Activated B cell treated with CpG ODN at 0.5 μM for 24 hours (primary cell): ENCODE measurements at regions of chr16 and their contacts with region 1.

Region 1: DNA sequence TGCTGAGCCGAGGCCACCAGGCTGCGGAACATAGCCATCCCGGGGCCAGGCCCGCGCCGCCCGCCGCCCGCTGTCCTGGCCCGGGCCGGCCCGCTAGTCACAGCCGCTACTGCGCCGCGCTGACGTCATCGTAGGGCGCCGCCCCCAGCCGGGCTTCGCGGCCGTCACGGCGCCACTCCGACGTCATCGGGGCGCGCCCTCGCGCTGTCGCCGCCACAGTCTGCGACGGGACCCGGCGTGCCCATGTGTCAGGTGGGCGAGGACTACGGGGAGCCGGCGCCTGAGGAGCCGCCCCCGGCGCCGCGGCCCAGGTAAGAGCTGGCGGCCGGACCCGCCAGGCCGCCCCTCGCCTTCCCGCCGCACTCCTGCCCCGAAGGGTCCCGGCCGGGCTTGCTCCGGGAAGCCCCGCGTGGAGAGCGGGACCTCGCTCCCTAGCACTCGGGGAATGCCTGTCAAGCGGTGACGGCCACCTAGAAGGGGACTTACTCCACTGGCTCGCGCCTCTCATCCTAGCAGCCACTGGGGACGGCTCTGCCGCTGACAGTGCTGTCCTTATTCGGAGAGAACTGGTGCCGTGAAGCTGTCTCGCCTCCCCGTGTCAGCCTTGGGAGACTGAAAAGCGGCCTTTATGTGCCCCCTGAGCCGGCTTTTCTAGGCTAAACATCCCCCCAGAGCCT is at the starts of genes CTU2 and RNF166:
- DNase-seq: peak; percentile 95
- ATAC-seq: peak; percentile 70
- H3K4me3 Mint-ChIP-seq: peak within 1 kb of the TSS; percentile 87
- H3K27ac Mint-ChIP-seq: peak within 1 kb of the TSS; percentile 85
- H3K4me1 Mint-ChIP-seq: peaks cover 51% of the 10 kb centered on the region
- H3K27me3 Mint-ChIP-seq: no peaks in the 10 kb centered on the region
- CTCF ChIP-seq: no peak
- total RNA-seq, gene CTU2: 28.8 and 36.7 TPM in 2 replicates
- total RNA-seq, gene RNF166: 31.0 and 45.3 TPM in 2 replicates

Region 2: DNA sequence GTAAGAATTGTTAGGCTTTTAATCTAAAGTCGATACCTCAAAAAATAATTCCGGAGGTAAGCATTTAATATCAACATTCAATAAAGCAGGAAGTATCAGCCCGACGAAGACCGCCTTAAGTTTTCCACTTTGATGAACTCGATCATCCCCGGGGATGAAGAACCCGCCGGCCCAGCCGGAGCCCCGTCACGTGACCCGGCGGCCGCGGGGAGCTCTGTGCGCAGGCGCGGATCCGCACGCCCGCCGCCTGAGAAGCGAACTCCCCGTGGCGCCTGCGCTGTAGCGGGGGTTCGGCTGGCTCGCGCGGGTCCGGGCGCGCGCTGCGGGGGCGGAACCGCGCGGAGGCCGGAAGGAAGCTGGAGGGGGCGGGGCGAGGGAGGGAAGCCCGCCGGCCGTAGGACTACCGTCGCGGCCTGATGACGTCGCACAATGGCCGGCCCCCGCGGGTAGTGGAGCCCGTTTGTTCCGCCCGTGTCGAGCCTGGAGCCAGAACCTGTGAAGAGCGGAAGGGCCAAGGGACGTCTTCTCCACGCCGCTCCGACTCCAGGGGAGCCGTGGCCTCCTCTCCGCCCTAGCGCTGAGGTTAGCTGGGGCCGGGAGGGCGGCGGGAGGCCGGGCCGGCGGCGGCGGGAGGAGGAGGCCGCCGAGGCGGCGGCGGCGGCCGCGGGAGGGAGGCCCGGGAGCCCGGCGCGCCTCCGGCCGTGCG is 136.3 kb before region 1 on chr16 and contains the start of gene ZC3H18:
- CTCF ChIA-PET with region 1: no interaction called
- POLR2A ChIA-PET with region 1: interaction called, 8 read pairs
- intact Hi-C with region 1: loop called (anchors 1 kb)
- DNase-seq: peak; percentile 99
- ATAC-seq: peak; percentile 92
- H3K4me3 Mint-ChIP-seq: peak within 1 kb of the TSS; percentile 86
- H3K27ac Mint-ChIP-seq: peak within 1 kb of the TSS; percentile 76
- H3K4me1 Mint-ChIP-seq: peaks cover 25% of the 10 kb centered on the region
- H3K27me3 Mint-ChIP-seq: no peaks in the 10 kb centered on the region
- CTCF ChIP-seq: no peak
- total RNA-seq, gene ZC3H18: 61.7 and 74.2 TPM in 2 replicates

Region 3: DNA sequence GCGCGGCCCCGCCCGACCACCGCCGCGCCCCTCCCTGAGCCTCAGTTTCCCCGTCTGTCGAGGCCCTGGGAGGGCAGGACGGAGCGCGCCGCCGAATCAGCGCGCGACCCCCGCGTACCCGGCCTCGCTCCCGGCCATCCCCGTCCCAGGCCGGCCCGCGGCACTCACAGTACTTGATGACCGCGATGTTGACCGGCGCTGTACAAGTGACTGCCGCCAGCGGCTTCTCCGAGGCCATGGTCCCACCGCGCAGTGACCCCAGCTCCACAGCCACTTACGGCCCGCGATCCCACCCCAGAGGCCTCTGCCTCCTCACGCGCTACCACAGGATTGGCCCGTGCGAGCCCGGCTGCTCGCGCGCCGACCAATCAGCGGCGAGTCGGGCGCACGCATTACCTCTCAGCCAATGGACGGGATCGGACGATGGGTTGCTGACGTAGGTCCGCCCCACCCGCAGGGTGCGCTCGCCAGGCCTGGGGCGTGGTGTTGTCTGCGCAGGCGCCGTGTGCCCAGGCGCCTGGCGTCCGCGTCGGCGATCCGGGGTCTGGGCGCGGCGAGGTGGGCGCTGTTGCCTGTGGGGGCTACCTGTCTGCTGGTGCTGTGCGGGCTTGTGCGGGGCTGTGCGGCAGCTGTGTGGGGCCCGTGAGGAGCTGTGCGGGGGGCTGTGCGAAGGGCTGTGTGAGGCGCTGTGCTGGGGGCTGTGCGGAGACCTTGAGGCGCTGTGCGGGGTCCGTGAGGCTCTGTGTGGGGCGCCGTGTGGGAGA is 43.4 kb before region 1 on chr16 and contains the start of gene MVD:
- CTCF ChIA-PET with region 1: interaction called, 3 read pairs
- POLR2A ChIA-PET with region 1: interaction called, 10 read pairs
- intact Hi-C with region 1: loop called (anchors 2 kb)
- DNase-seq: peak; percentile 89
- ATAC-seq: peak; percentile 94
- H3K4me3 Mint-ChIP-seq: peak within 1 kb of the TSS; percentile 94
- H3K27ac Mint-ChIP-seq: peak within 1 kb of the TSS; percentile 90
- H3K4me1 Mint-ChIP-seq: peaks cover 31% of the 10 kb centered on the region
- H3K27me3 Mint-ChIP-seq: no peaks in the 10 kb centered on the region
- CTCF ChIP-seq: no peak
- total RNA-seq, gene MVD: 115 and 140 TPM in 2 replicates

Region 4: DNA sequence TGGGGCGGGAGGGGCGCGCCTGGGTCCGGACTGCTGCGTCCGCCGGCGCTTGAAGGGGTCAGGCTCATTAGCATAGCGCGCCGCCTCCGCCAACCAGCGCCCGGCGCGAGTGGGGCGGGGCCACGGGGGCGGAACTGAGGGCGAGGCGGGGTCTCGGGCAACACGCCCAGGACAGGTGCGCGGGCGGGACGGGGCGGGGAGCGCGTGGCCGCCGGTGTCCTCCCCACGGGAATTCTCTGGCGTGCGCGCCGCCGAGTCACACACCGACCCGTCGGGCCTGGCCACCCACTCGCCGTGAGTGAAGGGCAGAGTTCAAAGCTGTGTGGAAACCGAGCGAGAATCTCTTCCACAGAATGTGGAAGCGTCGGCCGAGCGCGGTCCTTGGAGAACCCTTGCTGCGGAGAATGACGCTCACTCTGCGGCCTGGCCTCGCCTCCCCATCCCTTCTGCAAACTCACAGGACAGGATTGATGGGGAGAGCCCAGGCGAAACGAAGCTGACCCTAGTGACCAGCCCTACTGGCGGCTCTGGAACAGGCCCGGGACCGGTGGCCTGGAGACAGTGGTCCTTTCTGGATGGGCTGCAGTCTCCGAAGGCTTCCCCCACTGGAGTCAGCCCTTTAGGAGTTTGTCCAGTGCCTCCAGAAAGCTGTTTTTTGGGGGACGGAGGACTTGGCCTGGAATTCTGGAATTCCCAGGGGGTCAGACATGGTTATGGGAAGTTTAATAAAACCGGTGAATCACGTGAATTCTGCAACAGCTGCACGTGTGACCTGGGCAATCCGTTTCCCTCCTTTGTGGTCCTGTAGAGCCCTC is 19.8 kb before region 1 on chr16 and contains the start of gene SNAI3:
- CTCF ChIA-PET with region 1: interaction called, 17 read pairs
- POLR2A ChIA-PET with region 1: interaction called, 24 read pairs
- intact Hi-C with region 1: loop called (anchors 1 kb)
- DNase-seq: peak; percentile 94
- ATAC-seq: peak; percentile 74
- H3K4me3 Mint-ChIP-seq: peak within 1 kb of the TSS; percentile 83
- H3K27ac Mint-ChIP-seq: no peak within 1 kb of the TSS
- H3K4me1 Mint-ChIP-seq: peaks cover 46% of the 10 kb centered on the region
- H3K27me3 Mint-ChIP-seq: no peaks in the 10 kb centered on the region
- CTCF ChIP-seq: no peak
- total RNA-seq, gene SNAI3: 1.5 and 2.7 TPM in 2 replicates

Region 5: GRCh38 chr16:88719267-88719932 is 13.0 kb after region 1 on chr16:
- CTCF ChIA-PET with region 1: no interaction called
- POLR2A ChIA-PET with region 1: no interaction called
- intact Hi-C with region 1: no loop called
- DNase-seq: no peak
- ATAC-seq: no peak
- H3K4me3 Mint-ChIP-seq: no peak overlapping the region
- H3K27ac Mint-ChIP-seq: no peak overlapping the region
- H3K4me1 Mint-ChIP-seq: no peaks in the 10 kb centered on the region
- H3K27me3 Mint-ChIP-seq: no peaks in the 10 kb centered on the region
- CTCF ChIP-seq: no peak

Region 6: GRCh38 chr16:88787579-88788314 is 81.3 kb after region 1 on chr16:
- CTCF ChIA-PET with region 1: no interaction called
- POLR2A ChIA-PET with region 1: no interaction called
- intact Hi-C with region 1: no loop called
- DNase-seq: no peak
- ATAC-seq: no peak
- H3K4me3 Mint-ChIP-seq: no peak overlapping the region
- H3K27ac Mint-ChIP-seq: peak overlapping the region; percentile 59
- H3K4me1 Mint-ChIP-seq: peaks cover 42% of the 10 kb centered on the region
- H3K27me3 Mint-ChIP-seq: no peaks in the 10 kb centered on the region
- CTCF ChIP-seq: no peak